Natural killer cell (primary cell): ENCODE measurements at regions of chr10 and their contacts with region 1.

Region 1: DNA sequence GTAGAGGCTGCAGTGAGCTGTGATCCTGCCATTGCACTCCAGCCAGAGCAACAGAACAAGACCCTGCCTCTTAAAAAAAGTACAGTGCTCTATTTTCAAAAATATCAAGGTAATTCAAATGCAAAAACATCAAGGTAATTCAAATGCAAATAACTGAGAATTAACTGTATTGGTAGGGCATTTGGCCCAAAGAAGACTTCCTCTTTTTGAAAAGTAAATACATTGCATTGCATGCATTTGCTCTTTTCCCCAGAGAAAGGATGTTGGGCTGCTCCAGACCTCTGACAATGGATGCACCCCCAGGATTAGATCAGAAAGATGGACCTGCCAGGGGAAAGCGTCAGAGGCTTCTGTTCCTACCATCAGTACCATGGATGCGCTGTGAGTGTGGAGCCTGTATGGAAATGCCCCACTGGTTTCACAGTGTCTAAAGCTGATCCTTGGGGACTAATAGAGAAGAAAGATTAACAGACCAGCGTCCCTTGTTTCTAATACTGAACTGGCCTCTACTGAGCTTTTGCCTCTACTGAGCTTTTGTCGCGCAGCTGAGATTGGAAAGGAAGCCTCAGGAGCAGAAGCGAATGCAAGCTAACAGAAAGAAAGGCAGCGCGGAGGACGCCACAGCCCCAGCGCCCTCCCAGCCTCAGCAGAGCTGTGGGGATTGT is 93.5 kb upstream of the LYZL2 start:
- DNase-seq: no peak
- ATAC-seq: no peak
- H3K4me3 ChIP-seq: no peak overlapping the region
- H3K4me3 Mint-ChIP-seq: no peak overlapping the region
- H3K27ac ChIP-seq: no peak overlapping the region
- H3K27ac Mint-ChIP-seq: no peak overlapping the region
- H3K4me1 ChIP-seq: peaks cover 9% of the 10 kb centered on the region
- H3K4me1 Mint-ChIP-seq: no peaks in the 10 kb centered on the region
- H3K27me3 ChIP-seq: no peaks in the 10 kb centered on the region
- H3K27me3 Mint-ChIP-seq: peaks cover 6 to 15% of the 10 kb centered on the region in 2 donors
- CTCF ChIP-seq: no peak

Region 2: GRCh38 chr10:30422981-30423654 is 300.0 kb before region 1 on chr10:
- intact Hi-C with region 1: no loop called
- DNase-seq: no peak
- ATAC-seq: no peak
- H3K4me3 ChIP-seq: no peak overlapping the region
- H3K4me3 Mint-ChIP-seq: no peak overlapping the region
- H3K27ac ChIP-seq: peak overlapping the region; percentile 40
- H3K27ac Mint-ChIP-seq: no peak overlapping the region
- H3K4me1 ChIP-seq: peaks cover 24% of the 10 kb centered on the region
- H3K4me1 Mint-ChIP-seq: peaks cover 14 to 36% of the 10 kb centered on the region in 2 donors
- H3K27me3 ChIP-seq: no peaks in the 10 kb centered on the region
- H3K27me3 Mint-ChIP-seq: no peaks in the 10 kb centered on the region
- CTCF ChIP-seq: no peak

Region 3: DNA sequence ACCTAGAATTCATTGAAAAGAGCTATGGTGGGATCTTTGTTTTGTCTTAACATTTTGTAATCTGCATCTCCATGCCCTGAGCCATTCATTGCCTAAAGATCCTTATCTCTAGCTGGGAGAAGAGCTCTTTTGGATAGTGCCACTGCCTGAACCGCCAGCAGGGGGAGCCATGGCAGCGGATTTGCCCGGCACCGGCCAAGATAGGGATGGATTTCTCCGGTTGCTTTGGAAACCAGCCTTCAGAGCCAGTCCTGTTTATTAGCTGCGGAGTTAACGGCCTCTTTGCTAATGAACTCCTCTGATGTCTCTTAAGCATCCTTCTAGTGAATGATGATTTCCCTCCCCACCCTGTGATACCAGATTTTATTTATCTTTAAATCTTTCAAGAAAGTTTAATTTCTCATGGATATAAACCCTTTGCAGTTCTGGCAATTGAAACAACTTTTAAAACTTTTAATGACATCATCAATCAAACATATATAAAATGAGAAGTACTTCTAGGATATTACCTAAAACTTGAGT is 35.3 kb before region 1 on chr10:
- intact Hi-C with region 1: loop called (anchors 1 kb)
- DNase-seq: peak; percentile 69 to 86
- ATAC-seq: peak; percentile 72 to 85 (median 83)
- H3K4me3 ChIP-seq: no peak overlapping the region
- H3K4me3 Mint-ChIP-seq: no peak overlapping the region
- H3K27ac ChIP-seq: no peak overlapping the region
- H3K27ac Mint-ChIP-seq: no peak overlapping the region
- H3K4me1 ChIP-seq: no peaks in the 10 kb centered on the region
- H3K4me1 Mint-ChIP-seq: no peaks in the 10 kb centered on the region
- H3K27me3 ChIP-seq: peaks cover 4% of the 10 kb centered on the region
- H3K27me3 Mint-ChIP-seq: peaks cover 32 to 50% of the 10 kb centered on the region in 2 donors
- CTCF ChIP-seq: peak; percentile 99

Region 4: GRCh38 chr10:30763918-30764317 is 40.8 kb after region 1 on chr10:
- intact Hi-C with region 1: no loop called
- DNase-seq: no peak
- ATAC-seq: no peak
- H3K4me3 ChIP-seq: no peak overlapping the region
- H3K4me3 Mint-ChIP-seq: no peak overlapping the region
- H3K27ac ChIP-seq: no peak overlapping the region
- H3K27ac Mint-ChIP-seq: no peak overlapping the region
- H3K4me1 ChIP-seq: peaks cover 18% of the 10 kb centered on the region
- H3K4me1 Mint-ChIP-seq: no peaks in the 10 kb centered on the region
- H3K27me3 ChIP-seq: no peaks in the 10 kb centered on the region
- H3K27me3 Mint-ChIP-seq: peaks cover 0 to 6% of the 10 kb centered on the region in 2 donors
- CTCF ChIP-seq: no peak

Region 5: GRCh38 chr10:31770307-31770902 is 1047.3 kb after region 1 on chr10:
- intact Hi-C with region 1: loop called (anchors 1 kb)
- DNase-seq: peak; percentile 37 to 75
- ATAC-seq: peak; percentile 77 to 96 (median 87)
- H3K4me3 ChIP-seq: no peak overlapping the region
- H3K4me3 Mint-ChIP-seq: no peak overlapping the region
- H3K27ac ChIP-seq: no peak overlapping the region
- H3K27ac Mint-ChIP-seq: no peak overlapping the region
- H3K4me1 ChIP-seq: no peaks in the 10 kb centered on the region
- H3K4me1 Mint-ChIP-seq: no peaks in the 10 kb centered on the region
- H3K27me3 ChIP-seq: no peaks in the 10 kb centered on the region
- H3K27me3 Mint-ChIP-seq: no peaks in the 10 kb centered on the region
- CTCF ChIP-seq: peak; percentile 84

Region 6: GRCh38 chr10:31808258-31809218 is 1085.5 kb after region 1 on chr10:
- intact Hi-C with region 1: loop called (anchors 1 kb)
- DNase-seq: peak in 1 of 2 donors; percentile 77
- ATAC-seq: peak; percentile 68 to 86 (median 70)
- H3K4me3 ChIP-seq: no peak overlapping the region
- H3K4me3 Mint-ChIP-seq: peak overlapping the region; percentile 62
- H3K27ac ChIP-seq: peak overlapping the region; percentile 12
- H3K27ac Mint-ChIP-seq: peak overlapping the region; percentile 72 to 86
- H3K4me1 ChIP-seq: peaks cover 4% of the 10 kb centered on the region
- H3K4me1 Mint-ChIP-seq: peaks cover 7 to 10% of the 10 kb centered on the region in 2 donors
- H3K27me3 ChIP-seq: no peaks in the 10 kb centered on the region
- H3K27me3 Mint-ChIP-seq: no peaks in the 10 kb centered on the region
- CTCF ChIP-seq: peak; percentile 73